ENCODE measurements at regions of chr5 and their contacts with region 1.

Region 1: GRCh38 chr5:32329308-32329834 is 16.6 kb upstream of the MTMR12 start:
- DNase-seq: no peak
- H3K4me3 ChIP-seq: no peak overlapping the region
- CTCF ChIP-seq: peak; percentile 75

Region 2: GRCh38 chr5:32307769-32308194 is 21.6 kb before region 1 on chr5:
- CTCF ChIA-PET with region 1: interaction called, 10 read pairs
- POLR2A ChIA-PET with region 1: no interaction called
- DNase-seq: no peak
- H3K4me3 ChIP-seq: no peak overlapping the region
- CTCF ChIP-seq: no peak

Region 3: GRCh38 chr5:32346869-32347268 is 17.5 kb after region 1 on chr5:
- CTCF ChIA-PET with region 1: interaction called, 68 read pairs
- POLR2A ChIA-PET with region 1: no interaction called
- DNase-seq: no peak
- H3K4me3 ChIP-seq: no peak overlapping the region
- CTCF ChIP-seq: no peak

Region 4: GRCh38 chr5:32365623-32366022 is 36.3 kb after region 1 on chr5:
- CTCF ChIA-PET with region 1: interaction called, 10 read pairs
- POLR2A ChIA-PET with region 1: no interaction called
- DNase-seq: no peak
- H3K4me3 ChIP-seq: no peak overlapping the region
- CTCF ChIP-seq: no peak